Posterior cingulate gyrus (tissue), 11 donors: ENCODE measurements at regions of chr12 and their contacts with region 1.

Region 1: DNA sequence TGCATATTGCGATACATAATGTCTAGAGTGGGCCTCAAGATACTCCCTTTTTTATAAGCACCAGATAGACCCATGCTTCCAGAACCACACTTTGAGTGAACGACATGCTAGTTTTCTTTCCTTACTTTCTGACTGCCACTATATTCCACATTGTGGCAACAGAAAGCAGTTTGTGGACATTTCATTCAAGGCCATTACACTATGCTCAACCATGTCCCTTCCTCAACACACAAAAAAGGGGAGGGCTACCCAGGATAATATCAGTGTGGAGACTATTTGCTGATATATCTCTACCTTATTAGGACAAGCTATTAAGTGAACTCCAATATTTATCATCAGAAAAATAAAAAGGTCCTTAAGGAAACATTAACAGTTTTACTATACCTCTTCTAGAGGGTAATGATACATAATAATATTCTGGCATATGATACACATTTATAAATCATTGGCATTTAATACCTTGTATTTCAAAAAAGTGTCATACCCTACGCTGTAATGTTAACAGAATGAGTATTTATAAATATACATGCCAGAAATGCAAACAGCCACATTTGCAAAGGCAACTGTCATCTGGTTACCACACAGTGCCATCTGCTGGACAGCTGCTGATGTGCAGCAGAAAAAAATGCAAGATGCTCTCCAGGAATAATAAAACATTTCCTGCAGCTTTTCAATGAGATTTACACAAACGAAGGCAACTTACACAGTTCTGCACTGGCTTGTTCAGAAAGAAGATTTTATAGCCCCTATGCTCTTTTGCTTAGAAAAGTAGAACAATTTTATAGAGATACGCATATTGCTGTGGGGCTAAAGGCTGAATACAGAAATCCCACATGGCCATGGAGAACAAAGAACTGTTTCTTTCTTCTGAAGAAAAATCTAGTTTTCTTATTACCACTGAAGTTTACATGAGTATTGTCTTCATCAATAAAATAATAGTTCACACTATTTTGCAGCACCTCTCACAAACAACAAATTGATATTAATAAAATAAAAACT is 182.2 kb upstream of the GRIP1 start:
- DNase-seq: peak; percentile 42 to 92 (median 68)

Region 2: GRCh38 chr12:66340131-66340530 is 520.9 kb before region 1 on chr12:
- intact Hi-C with region 1: no loop called
- DNase-seq: no peak

Region 3: GRCh38 chr12:66688846-66689439 is 172.1 kb before region 1 on chr12:
- intact Hi-C with region 1: loop called (anchors 10 kb)
- DNase-seq: peak in 6 of 10 donors; percentile 18 to 79 (median 30)